ENCODE measurements at regions of chr16 and their contacts with region 1.

Region 1: DNA sequence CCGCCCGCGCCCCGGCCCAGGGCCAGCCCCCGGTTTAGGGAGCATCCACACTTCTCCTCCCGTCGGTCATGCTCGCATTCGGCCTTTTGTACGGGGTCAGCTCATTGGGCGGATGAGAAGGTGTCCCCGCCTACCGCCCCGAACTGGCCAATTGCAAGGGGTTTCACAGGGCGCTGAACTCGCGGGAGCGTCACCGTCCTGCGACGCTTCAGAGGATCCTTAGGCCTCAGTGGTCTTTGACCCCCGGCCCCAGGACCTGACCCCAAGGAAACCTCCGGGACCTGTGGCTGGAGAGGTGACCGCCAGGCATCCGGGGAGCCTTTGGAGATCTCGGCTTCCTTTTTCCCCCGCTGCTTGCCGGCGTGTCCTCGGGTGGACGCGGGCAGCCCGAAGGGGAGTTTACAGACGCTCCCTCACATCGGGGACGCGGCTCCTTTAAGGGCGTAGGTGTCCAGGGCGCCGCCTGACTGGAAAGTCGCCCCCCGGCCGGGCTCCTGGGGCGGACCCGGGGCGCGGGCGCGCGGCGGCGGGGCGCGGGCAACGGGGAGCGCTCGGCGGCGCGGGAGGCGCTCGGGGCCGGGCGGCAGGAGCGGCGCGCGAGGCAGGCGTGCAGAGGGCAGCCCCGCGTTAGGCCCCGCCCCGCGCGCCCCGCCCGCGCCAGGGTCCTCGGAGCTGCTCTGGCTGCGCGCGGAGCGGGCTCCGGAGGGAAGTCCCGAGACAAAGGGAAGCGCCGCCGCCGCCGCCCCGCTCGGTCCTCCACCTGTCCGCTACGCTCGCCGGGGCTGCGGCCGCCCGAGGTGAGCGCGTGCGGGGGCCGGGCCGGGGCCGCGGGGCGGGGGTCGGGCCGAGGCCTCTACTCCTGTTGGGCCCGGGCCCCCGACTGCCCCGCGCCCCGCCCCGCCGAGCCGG is at the start of gene UBE2I:
- DNase-seq: peak; percentile 96 to 99 (median 98)
- ATAC-seq: peak; percentile 73
- H3K4me3 ChIP-seq: peak within 1 kb of the TSS; percentile 82 to 95
- H3K4me3 Mint-ChIP-seq: peak within 1 kb of the TSS; percentile 92
- H3K27ac ChIP-seq: peak within 1 kb of the TSS; percentile 100
- H3K27ac Mint-ChIP-seq: peak within 1 kb of the TSS; percentile 100
- H3K4me1 ChIP-seq: peaks cover 50% of the 10 kb centered on the region
- H3K4me1 Mint-ChIP-seq: peaks cover 41% of the 10 kb centered on the region
- H3K27me3 ChIP-seq: no peaks in the 10 kb centered on the region
- H3K27me3 Mint-ChIP-seq: no peaks in the 10 kb centered on the region
- CTCF ChIP-seq: no peak
- total RNA-seq, gene UBE2I: 285 to 294 TPM

Region 2: GRCh38 chr16:788394-789126 is 520.7 kb before region 1 on chr16 and contains the start of gene CHTF18:
- CTCF ChIA-PET with region 1: no interaction called
- POLR2A ChIA-PET with region 1: no interaction called
- intact Hi-C with region 1: loop called in 1 of 2 experiments (anchors 2 kb)
- DNase-seq: peak; percentile 88 to 96 (median 92)
- ATAC-seq: peak; percentile 98
- H3K4me3 ChIP-seq: peak within 1 kb of the TSS; percentile 81 to 97
- H3K4me3 Mint-ChIP-seq: peak within 1 kb of the TSS; percentile 84
- H3K27ac ChIP-seq: peak within 1 kb of the TSS; percentile 10 to 53
- H3K27ac Mint-ChIP-seq: peak within 1 kb of the TSS; percentile 49
- H3K4me1 ChIP-seq: peaks cover 19% of the 10 kb centered on the region
- H3K4me1 Mint-ChIP-seq: peaks cover 7% of the 10 kb centered on the region
- H3K27me3 ChIP-seq: no peaks in the 10 kb centered on the region
- H3K27me3 Mint-ChIP-seq: no peaks in the 10 kb centered on the region
- CTCF ChIP-seq: no peak
- total RNA-seq, gene CHTF18: 34.4 to 38.4 TPM

Region 3: GRCh38 chr16:1342526-1343427 is 33.5 kb after region 1 on chr16:
- CTCF ChIA-PET with region 1: no interaction called
- POLR2A ChIA-PET with region 1: interaction called, 3 read pairs
- intact Hi-C with region 1: loop called (anchors 1 to 2 kb)
- DNase-seq: peak; percentile 89 to 98 (median 96)
- ATAC-seq: peak; percentile 92
- H3K4me3 ChIP-seq: peak overlapping the region; percentile 45 to 70
- H3K4me3 Mint-ChIP-seq: peak overlapping the region; percentile 79
- H3K27ac ChIP-seq: peak overlapping the region in 1 of 2 experiments; percentile 18
- H3K27ac Mint-ChIP-seq: no peak overlapping the region
- H3K4me1 ChIP-seq: peaks cover 15% of the 10 kb centered on the region
- H3K4me1 Mint-ChIP-seq: peaks cover 18% of the 10 kb centered on the region
- H3K27me3 ChIP-seq: no peaks in the 10 kb centered on the region
- H3K27me3 Mint-ChIP-seq: no peaks in the 10 kb centered on the region
- CTCF ChIP-seq: no peak

Region 4: DNA sequence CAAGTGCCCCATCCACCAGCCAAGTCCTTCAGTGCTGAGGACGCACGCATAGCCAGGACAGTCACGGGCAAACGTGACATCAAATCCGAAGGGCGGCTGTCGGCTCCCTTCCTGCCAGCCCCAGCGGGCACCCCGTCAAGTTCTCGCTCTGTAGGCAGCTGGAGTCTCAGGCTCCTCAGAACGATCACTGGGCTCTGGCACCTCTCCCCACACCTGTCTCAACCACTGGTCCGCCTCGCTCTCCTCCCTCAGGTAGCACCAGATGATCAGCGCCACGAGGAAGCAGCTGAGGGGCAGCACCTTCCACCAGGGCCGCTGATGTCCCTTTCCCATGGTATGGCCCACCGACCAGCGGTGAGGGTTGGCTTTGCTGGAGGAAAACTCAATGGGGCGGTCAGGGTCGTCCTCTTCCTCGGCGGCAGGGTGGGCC is 110.9 kb after region 1 on chr16:
- CTCF ChIA-PET with region 1: no interaction called
- POLR2A ChIA-PET with region 1: interaction called, 5 read pairs
- intact Hi-C with region 1: loop called (anchors 1 to 2 kb)
- DNase-seq: peak in 1 of 9 experiments; percentile 16
- ATAC-seq: no peak
- H3K4me3 ChIP-seq: peak overlapping the region; percentile 85 to 95
- H3K4me3 Mint-ChIP-seq: peak overlapping the region; percentile 92
- H3K27ac ChIP-seq: peak overlapping the region; percentile 81 to 98
- H3K27ac Mint-ChIP-seq: peak overlapping the region; percentile 76
- H3K4me1 ChIP-seq: peaks cover 19% of the 10 kb centered on the region
- H3K4me1 Mint-ChIP-seq: peaks cover 29% of the 10 kb centered on the region
- H3K27me3 ChIP-seq: no peaks in the 10 kb centered on the region
- H3K27me3 Mint-ChIP-seq: no peaks in the 10 kb centered on the region
- CTCF ChIP-seq: no peak

Region 5: GRCh38 chr16:1492923-1493745 is 183.9 kb after region 1 on chr16 and contains the start of gene TELO2:
- CTCF ChIA-PET with region 1: no interaction called
- POLR2A ChIA-PET with region 1: no interaction called
- intact Hi-C with region 1: loop called in 1 of 2 experiments (anchors 2 kb)
- DNase-seq: peak; percentile 75 to 93 (median 85)
- ATAC-seq: peak; percentile 94
- H3K4me3 ChIP-seq: peak within 1 kb of the TSS; percentile 68 to 87
- H3K4me3 Mint-ChIP-seq: peak within 1 kb of the TSS; percentile 95
- H3K27ac ChIP-seq: peak within 1 kb of the TSS; percentile 93 to 96
- H3K27ac Mint-ChIP-seq: peak within 1 kb of the TSS; percentile 100
- H3K4me1 ChIP-seq: peaks cover 16% of the 10 kb centered on the region
- H3K4me1 Mint-ChIP-seq: peaks cover 11% of the 10 kb centered on the region
- H3K27me3 ChIP-seq: no peaks in the 10 kb centered on the region
- H3K27me3 Mint-ChIP-seq: no peaks in the 10 kb centered on the region
- CTCF ChIP-seq: no peak
- total RNA-seq, gene TELO2: 23.0 to 23.6 TPM

Region 6: GRCh38 chr16:1705688-1706385 is 396.6 kb after region 1 on chr16 and contains the start of gene MAPK8IP3:
- CTCF ChIA-PET with region 1: no interaction called
- POLR2A ChIA-PET with region 1: interaction called, 3 read pairs
- intact Hi-C with region 1: loop called in 1 of 2 experiments (anchors 1 kb)
- DNase-seq: peak; percentile 88 to 99 (median 95)
- ATAC-seq: peak; percentile 74
- H3K4me3 ChIP-seq: peak within 1 kb of the TSS; percentile 94 to 99
- H3K4me3 Mint-ChIP-seq: peak within 1 kb of the TSS; percentile 99
- H3K27ac ChIP-seq: peak within 1 kb of the TSS; percentile 83 to 90
- H3K27ac Mint-ChIP-seq: peak within 1 kb of the TSS; percentile 97
- H3K4me1 ChIP-seq: peaks cover 32% of the 10 kb centered on the region
- H3K4me1 Mint-ChIP-seq: peaks cover 43% of the 10 kb centered on the region
- H3K27me3 ChIP-seq: no peaks in the 10 kb centered on the region
- H3K27me3 Mint-ChIP-seq: no peaks in the 10 kb centered on the region
- CTCF ChIP-seq: peak; percentile 92
- total RNA-seq, gene MAPK8IP3: 381 to 419 TPM

Measured in CD8-positive, alpha-beta T cell (primary cell).